HepG2 (cell line): ENCODE measurements at regions of chr14 and their contacts with region 1.

Region 1: GRCh38 chr14:72771561-72771960 is 122.3 kb downstream of the DPF3 start:
- DNase-seq: no peak
- ATAC-seq: no peak
- H3K4me3 ChIP-seq: no peak overlapping the region
- H3K27ac ChIP-seq: no peak overlapping the region
- H3K4me1 ChIP-seq: peaks cover 25% of the 10 kb centered on the region
- H3K27me3 ChIP-seq: no peaks in the 10 kb centered on the region; a peak in 1 of 5 replicates
- CTCF ChIP-seq: no peak
- EP300 ChIP-seq: no peak
- POLR2A ChIP-seq: no peak
- RAD21 ChIP-seq: no peak

Region 2: GRCh38 chr14:72893636-72894321 is 122.2 kb after region 1 on chr14 and contains the start of gene DPF3:
- CTCF ChIA-PET with region 1: no interaction called
- POLR2A ChIA-PET with region 1: interaction called, 4 read pairs
- in situ Hi-C with region 1: no loop called
- intact Hi-C with region 1: loop called (anchors 5 kb)
- DNase-seq: peak; percentile 89
- ATAC-seq: peak; percentile 97
- H3K4me3 ChIP-seq: peak within 1 kb of the TSS; percentile 65 to 82 (median 73)
- H3K27ac ChIP-seq: no peak within 1 kb of the TSS
- H3K4me1 ChIP-seq: peaks cover 29% of the 10 kb centered on the region
- H3K27me3 ChIP-seq: peaks cover 9 to 51% of the 10 kb centered on the region in 2 experiments; a peak in 4 of 5 replicates
- CTCF ChIP-seq: no peak
- EP300 ChIP-seq: no peak
- POLR2A ChIP-seq: no peak
- RAD21 ChIP-seq: no peak
- total RNA-seq, gene DPF3: 0.60 TPM in 2 replicates